Activated naive CD4-positive, alpha-beta T cell treated with anti-CD3 and anti-CD28 coated beads for 36 hours (primary cell): ENCODE measurements at regions of chr4 and their contacts with region 1.

Region 1: GRCh38 chr4:83110223-83110945 is 4.1 kb downstream of the PLAC8 start:
- DNase-seq: peak; percentile 95
- H3K4me3 Mint-ChIP-seq: peak overlapping the region; percentile 88
- H3K27ac Mint-ChIP-seq: peak overlapping the region; percentile 98
- H3K4me1 Mint-ChIP-seq: peaks cover 41% of the 10 kb centered on the region
- H3K27me3 Mint-ChIP-seq: no peaks in the 10 kb centered on the region

Region 2: DNA sequence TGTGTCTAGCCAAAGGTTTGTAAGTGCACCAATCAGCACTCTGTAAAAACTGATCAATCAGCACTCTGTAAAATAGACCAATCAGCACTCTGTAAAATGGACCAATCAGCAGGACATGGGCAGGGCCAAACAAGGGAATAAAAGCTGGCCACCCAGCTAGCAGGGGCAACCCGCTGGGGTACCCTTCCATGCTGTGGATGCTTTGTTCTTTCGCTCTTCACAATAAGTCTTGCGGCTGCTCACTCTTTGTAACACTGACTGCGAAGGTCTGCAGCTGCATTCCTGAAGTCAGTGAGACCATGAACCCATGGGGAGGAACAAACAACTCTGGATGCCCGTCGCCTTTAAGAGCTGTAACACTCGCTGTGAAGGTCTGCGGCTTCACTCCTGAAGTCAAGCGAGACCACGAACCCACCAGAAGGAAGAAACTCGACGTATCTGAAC is 694.4 kb before region 1 on chr4:
- CTCF ChIA-PET with region 1: no interaction called
- intact Hi-C with region 1: no loop called
- DNase-seq: no peak
- H3K4me3 Mint-ChIP-seq: peak overlapping the region; percentile 28
- H3K27ac Mint-ChIP-seq: no peak overlapping the region
- H3K4me1 Mint-ChIP-seq: peaks cover 3% of the 10 kb centered on the region
- H3K27me3 Mint-ChIP-seq: peaks cover 21% of the 10 kb centered on the region

Region 3: GRCh38 chr4:82428969-82429727 is 681.2 kb before region 1 on chr4:
- CTCF ChIA-PET with region 1: no interaction called
- intact Hi-C with region 1: loop called (anchors 2 kb)
- DNase-seq: peak; percentile 92
- H3K4me3 Mint-ChIP-seq: peak overlapping the region; percentile 93
- H3K27ac Mint-ChIP-seq: peak overlapping the region; percentile 99
- H3K4me1 Mint-ChIP-seq: peaks cover 64% of the 10 kb centered on the region
- H3K27me3 Mint-ChIP-seq: no peaks in the 10 kb centered on the region

Region 4: DNA sequence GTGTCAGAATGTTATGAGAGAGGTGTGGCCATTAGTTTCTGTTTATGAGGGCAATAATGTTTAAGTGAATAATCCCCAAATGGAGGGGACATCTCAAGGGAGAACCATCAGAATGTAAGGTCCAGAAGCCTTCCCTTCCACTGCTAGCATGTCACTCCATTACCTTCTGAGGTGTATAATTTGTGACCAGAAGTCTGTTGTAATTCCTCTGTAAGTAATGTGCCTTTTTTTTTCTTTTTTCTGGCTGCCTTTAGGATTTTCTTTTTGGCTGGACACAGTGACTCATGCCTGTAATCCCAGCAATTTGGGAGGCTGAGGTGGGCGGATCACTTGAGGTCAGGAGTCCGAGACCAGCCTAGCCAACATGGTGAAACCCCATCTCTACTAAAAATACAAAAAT is 86.2 kb before region 1 on chr4:
- CTCF ChIA-PET with region 1: no interaction called
- intact Hi-C with region 1: no loop called
- DNase-seq: no peak
- H3K4me3 Mint-ChIP-seq: no peak overlapping the region
- H3K27ac Mint-ChIP-seq: no peak overlapping the region
- H3K4me1 Mint-ChIP-seq: peaks cover 5% of the 10 kb centered on the region
- H3K27me3 Mint-ChIP-seq: no peaks in the 10 kb centered on the region

Region 5: GRCh38 chr4:83034630-83035494 is 75.5 kb before region 1 on chr4 and contains the start of gene COPS4:
- CTCF ChIA-PET with region 1: interaction called, 5 read pairs
- intact Hi-C with region 1: loop called (anchors 1 kb)
- DNase-seq: peak; percentile 98
- H3K4me3 Mint-ChIP-seq: peak within 1 kb of the TSS; percentile 95
- H3K27ac Mint-ChIP-seq: peak within 1 kb of the TSS; percentile 98
- H3K4me1 Mint-ChIP-seq: peaks cover 36% of the 10 kb centered on the region
- H3K27me3 Mint-ChIP-seq: no peaks in the 10 kb centered on the region
- total RNA-seq, gene COPS4: 37.1 to 38.6 TPM

Region 6: DNA sequence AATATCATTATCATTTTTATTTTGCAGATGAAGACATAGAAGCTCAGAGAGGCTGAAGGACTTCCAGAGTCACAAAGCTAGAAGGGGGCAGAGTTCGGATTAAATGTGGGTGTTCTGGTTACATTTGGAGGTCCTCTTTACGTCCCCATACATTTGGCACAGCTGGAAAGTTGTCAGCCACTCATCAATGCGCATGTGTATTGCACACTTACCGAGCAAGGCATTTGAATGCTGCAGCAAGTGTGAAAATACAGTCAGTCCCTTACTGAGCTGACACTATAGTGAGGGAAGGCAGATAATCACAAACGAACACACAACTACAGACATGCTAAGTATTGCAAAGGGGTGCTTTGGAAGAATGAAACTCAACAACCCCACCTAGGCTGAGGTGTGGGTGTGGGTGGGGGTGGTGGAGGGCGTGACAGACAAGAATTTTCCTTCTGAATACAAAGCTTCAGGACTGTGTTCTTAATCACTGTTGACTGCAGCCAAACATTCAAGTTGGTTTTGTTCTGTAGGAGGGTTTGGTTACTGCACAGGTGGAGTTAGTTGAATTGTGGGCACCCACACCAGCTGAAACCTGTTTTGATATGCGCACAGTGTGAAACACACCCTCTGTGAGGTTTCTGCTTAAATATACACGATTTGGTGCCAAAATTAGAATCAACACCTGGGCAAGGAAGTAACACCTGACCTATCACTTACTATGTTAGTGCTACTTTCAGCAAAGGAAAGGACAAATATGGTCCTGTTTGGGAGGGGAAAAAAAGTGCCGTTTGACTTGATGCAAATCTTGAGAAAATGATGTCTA is 101.9 kb after region 1 on chr4:
- CTCF ChIA-PET with region 1: interaction called, 22 read pairs
- intact Hi-C with region 1: loop called (anchors 1 kb)
- DNase-seq: peak; percentile 72
- H3K4me3 Mint-ChIP-seq: no peak overlapping the region
- H3K27ac Mint-ChIP-seq: peak overlapping the region; percentile 65
- H3K4me1 Mint-ChIP-seq: peaks cover 54% of the 10 kb centered on the region
- H3K27me3 Mint-ChIP-seq: no peaks in the 10 kb centered on the region

Region 7: GRCh38 chr4:83252782-83253405 is 142.5 kb after region 1 on chr4:
- CTCF ChIA-PET with region 1: interaction called, 26 read pairs
- intact Hi-C with region 1: loop called (anchors 1 kb)
- DNase-seq: peak; percentile 90
- H3K4me3 Mint-ChIP-seq: no peak overlapping the region
- H3K27ac Mint-ChIP-seq: no peak overlapping the region
- H3K4me1 Mint-ChIP-seq: peaks cover 6% of the 10 kb centered on the region
- H3K27me3 Mint-ChIP-seq: no peaks in the 10 kb centered on the region

Region 8: GRCh38 chr4:83340692-83341343 is 230.4 kb after region 1 on chr4:
- CTCF ChIA-PET with region 1: no interaction called
- intact Hi-C with region 1: no loop called
- DNase-seq: peak; percentile 43
- H3K4me3 Mint-ChIP-seq: no peak overlapping the region
- H3K27ac Mint-ChIP-seq: no peak overlapping the region
- H3K4me1 Mint-ChIP-seq: peaks cover 19% of the 10 kb centered on the region
- H3K27me3 Mint-ChIP-seq: peaks cover 2% of the 10 kb centered on the region

Region 9: DNA sequence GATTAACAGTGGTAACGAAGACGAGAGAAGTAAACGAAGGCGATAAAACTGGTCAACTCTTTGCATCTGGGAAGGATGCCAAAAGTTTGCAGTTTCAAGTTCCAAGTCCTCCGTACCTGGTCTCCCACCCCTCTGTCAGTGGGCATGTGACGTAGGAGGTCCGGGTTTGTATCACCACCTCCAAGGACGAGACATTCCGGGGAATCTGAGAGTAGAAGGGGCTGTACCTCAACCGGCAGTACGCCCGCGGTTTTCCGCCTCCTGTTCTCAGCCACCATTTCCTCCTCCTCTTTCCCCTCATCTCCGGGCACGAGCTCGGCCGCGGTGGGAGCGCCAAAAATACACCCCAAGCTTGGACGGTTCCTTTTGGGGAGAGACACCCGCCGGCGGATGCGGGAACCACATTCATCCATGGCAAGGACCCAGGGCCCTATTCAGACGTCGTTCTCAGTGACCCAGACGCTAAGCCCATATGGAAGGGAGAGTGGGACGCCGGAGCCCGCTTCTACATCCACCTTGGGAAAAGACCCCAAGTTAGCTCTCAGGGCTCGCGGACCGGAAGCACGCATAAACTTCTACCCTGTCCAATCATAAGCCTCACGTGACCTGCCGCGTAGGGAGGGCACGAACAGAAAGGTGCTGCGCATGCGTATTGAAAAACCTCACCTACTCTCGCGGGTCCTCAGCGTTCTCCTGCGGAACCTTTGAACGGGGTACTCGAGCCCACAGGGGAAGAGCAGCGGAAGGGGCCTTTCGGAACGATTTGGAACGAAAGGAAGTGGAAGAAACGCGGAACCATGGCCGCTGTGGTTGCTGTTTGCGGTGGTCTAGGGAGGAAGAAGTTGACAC is 345.1 kb after region 1 on chr4 and contains the starts of genes HELQ and MRPS18C:
- CTCF ChIA-PET with region 1: no interaction called
- intact Hi-C with region 1: loop called (anchors 1 kb)
- DNase-seq: peak; percentile 98
- H3K4me3 Mint-ChIP-seq: peak within 1 kb of the TSS; percentile 100
- H3K27ac Mint-ChIP-seq: peak within 1 kb of the TSS; percentile 100
- H3K4me1 Mint-ChIP-seq: peaks cover 44% of the 10 kb centered on the region
- H3K27me3 Mint-ChIP-seq: no peaks in the 10 kb centered on the region
- total RNA-seq, gene HELQ: 7.9 to 10.9 TPM
- total RNA-seq, gene MRPS18C: 67.2 to 69.9 TPM